Naive thymus-derived CD4-positive, alpha-beta T cell (primary cell): ENCODE measurements at regions of chr5 and their contacts with region 1.

Region 1: DNA sequence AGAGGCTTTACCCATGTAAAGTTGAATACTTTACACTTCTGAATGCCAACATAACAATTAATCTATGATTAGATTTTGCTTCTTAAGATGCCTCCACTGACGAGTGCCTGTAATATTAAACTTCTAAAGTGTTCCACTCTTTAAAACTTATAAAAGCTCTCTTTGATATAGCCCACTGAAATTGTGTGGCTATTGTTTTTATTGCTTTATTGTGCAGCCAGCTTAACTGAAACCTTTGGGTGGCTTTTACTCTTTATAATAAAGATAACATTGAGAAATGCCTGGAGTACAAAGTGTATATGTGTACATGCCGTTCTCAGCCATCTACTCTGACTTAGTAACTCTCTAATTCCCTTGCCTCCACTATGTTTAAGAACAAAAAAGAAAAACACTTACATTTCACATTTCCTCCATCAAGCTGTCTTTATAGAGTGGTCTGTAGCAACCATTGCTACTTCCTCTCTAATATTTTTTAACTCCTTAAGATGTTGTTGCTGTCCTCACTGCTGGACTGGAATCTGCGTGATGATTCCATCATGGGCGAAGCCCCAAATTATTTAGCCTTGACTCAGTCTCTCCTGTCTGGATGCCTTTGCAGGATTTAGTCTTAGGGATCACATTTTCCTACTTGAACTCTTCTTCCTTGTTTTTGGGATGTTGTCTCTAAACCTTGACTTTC is 9.1 kb downstream of the PIK3R1 start:
- DNase-seq: no peak
- ATAC-seq: no peak
- H3K4me3 ChIP-seq: no peak overlapping the region
- H3K4me3 Mint-ChIP-seq: peak overlapping the region in 7 of 10 donors; percentile 21 to 48 (median 40)
- H3K27ac ChIP-seq: no peak overlapping the region
- H3K27ac Mint-ChIP-seq: peak overlapping the region in 8 of 9 donors; percentile 3 to 81 (median 26)
- H3K4me1 ChIP-seq: peaks cover 33 to 44% of the 10 kb centered on the region in 2 donors
- H3K4me1 Mint-ChIP-seq: peaks cover 58 to 96% (median 90%) of the 10 kb centered on the region in 7 donors
- H3K27me3 ChIP-seq: no peaks in the 10 kb centered on the region
- H3K27me3 Mint-ChIP-seq: no peaks in the 10 kb centered on the region

Region 2: DNA sequence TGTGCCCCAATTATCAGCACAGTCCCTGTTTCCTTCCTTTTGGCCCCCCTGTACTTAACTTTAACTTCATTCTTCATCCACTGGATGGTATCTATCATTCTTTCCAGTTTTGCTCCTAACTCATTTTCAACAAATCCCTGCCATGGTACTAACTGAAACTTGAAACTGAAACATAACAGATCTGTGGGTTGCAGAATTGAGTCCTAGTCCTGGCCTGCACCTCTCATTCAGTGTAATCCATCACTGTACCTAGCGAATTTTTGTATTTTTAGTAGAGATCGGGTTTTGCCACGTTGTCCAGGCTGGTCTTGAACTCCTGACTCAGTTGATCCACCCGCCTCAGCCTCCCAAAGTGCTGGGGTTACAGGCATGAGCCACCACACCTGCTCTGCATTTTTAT is 24.4 kb before region 1 on chr5:
- CTCF ChIA-PET with region 1: no interaction called
- POLR2A ChIA-PET with region 1: no interaction called
- intact Hi-C with region 1: loop called in 1 of 2 experiments (anchors 2 kb)
- DNase-seq: no peak
- ATAC-seq: no peak
- H3K4me3 ChIP-seq: no peak overlapping the region
- H3K4me3 Mint-ChIP-seq: no peak overlapping the region
- H3K27ac ChIP-seq: no peak overlapping the region
- H3K27ac Mint-ChIP-seq: no peak overlapping the region
- H3K4me1 ChIP-seq: no peaks in the 10 kb centered on the region
- H3K4me1 Mint-ChIP-seq: no peaks in the 10 kb centered on the region
- H3K27me3 ChIP-seq: no peaks in the 10 kb centered on the region
- H3K27me3 Mint-ChIP-seq: peaks cover 0 to 17% (median 11%) of the 10 kb centered on the region in 5 donors

Region 3: DNA sequence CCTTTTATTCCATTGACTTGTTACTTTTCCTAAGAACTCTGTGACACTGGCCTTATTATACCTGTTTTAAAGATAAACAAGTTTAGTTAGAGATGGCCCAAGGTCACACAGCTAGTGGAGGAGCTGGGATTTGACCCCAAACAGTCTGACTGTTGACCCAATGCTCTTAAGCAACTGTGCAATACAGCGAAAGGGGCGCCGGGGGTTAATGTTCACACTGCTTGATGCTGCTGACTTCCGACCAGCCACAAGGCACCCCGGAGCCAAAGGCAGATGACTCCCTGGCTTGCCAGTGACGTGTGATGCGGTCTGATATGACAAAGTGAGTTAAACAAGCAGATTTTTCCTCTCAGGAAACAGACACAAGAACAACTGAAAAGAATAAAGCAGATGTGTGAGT is 14.8 kb after region 1 on chr5:
- CTCF ChIA-PET with region 1: interaction called, 3 read pairs
- POLR2A ChIA-PET with region 1: interaction called, 9 read pairs
- intact Hi-C with region 1: loop called in 1 of 2 experiments (anchors 1 kb)
- DNase-seq: peak; percentile 50 to 91 (median 86)
- ATAC-seq: peak; percentile 98
- H3K4me3 ChIP-seq: no peak overlapping the region
- H3K4me3 Mint-ChIP-seq: peak overlapping the region; percentile 11 to 84 (median 70)
- H3K27ac ChIP-seq: peak overlapping the region; percentile 70
- H3K27ac Mint-ChIP-seq: peak overlapping the region; percentile 69 to 98 (median 87)
- H3K4me1 ChIP-seq: peaks cover 41 to 51% of the 10 kb centered on the region in 2 donors
- H3K4me1 Mint-ChIP-seq: peaks cover 52 to 93% (median 90%) of the 10 kb centered on the region in 7 donors
- H3K27me3 ChIP-seq: no peaks in the 10 kb centered on the region
- H3K27me3 Mint-ChIP-seq: no peaks in the 10 kb centered on the region

Region 4: DNA sequence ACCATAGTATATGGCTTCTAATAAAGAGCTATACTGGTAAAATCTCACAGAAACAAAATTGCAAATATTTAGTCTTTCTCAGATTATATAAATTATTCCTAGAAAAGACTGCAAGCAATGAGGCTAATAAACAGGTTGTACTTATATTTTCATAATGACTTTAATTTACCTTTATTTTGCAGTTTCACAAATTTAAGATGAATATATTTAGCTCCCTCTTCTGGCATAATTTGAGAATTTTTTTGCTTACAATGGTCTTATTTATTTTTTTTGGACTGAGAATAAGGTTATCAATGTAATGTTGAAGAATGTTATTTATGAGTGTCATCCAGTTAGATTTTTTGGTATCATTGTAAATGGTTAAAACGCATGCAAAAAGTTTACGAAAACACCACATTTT is 47.6 kb after region 1 on chr5:
- CTCF ChIA-PET with region 1: no interaction called
- POLR2A ChIA-PET with region 1: no interaction called
- intact Hi-C with region 1: no loop called
- DNase-seq: peak in 3 of 9 donors; percentile 32 to 45 (median 37)
- ATAC-seq: no peak
- H3K4me3 ChIP-seq: no peak overlapping the region
- H3K4me3 Mint-ChIP-seq: peak overlapping the region in 2 of 10 donors; percentile 13 to 17
- H3K27ac ChIP-seq: no peak overlapping the region
- H3K27ac Mint-ChIP-seq: peak overlapping the region in 8 of 9 donors; percentile 4 to 95 (median 58)
- H3K4me1 ChIP-seq: peaks cover 68 to 80% of the 10 kb centered on the region in 2 donors
- H3K4me1 Mint-ChIP-seq: peaks cover 33 to 92% (median 80%) of the 10 kb centered on the region in 7 donors
- H3K27me3 ChIP-seq: no peaks in the 10 kb centered on the region
- H3K27me3 Mint-ChIP-seq: no peaks in the 10 kb centered on the region